ENCODE measurements at regions of chr5 and their contacts with region 1.

Region 1: DNA sequence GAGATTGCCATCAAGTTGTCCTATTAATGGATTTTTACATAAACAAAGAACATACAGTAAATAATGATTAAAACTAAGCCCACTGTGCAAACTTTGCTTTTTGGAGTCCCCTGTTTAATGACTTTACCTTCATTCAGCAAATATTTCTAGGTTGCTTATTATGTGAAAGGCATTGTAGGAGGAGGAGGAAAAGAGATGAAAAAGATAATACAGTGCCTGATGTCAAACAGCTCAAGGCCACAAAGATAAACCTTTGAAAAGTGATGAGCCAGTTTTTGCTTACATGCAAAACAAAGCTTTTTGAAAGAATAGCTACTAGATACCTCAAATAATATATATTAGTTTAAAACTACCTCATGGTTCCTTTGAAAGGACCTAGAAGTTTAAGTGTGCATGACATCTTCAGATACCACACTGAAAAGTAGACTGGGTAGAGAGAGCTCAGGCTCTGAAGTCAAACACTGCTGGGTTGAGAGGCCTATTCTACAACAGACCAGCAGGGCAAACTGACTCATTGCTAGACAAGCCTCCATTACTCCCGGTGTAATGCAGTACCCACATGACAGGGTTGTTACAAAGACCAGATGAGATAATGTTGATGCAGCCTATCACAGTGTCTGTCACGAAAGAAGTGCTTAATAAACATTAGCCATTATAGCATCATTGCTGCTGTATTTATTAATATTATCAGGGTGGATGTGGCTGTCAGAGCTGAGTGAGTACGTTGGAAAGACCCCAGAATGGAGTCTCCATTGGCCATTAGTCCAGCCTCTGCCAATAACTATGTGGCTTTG is 11.8 kb downstream of the DEPDC1B start:
- DNase-seq: no peak
- ATAC-seq: peak; percentile 57
- H3K4me3 ChIP-seq: no peak overlapping the region
- H3K4me3 Mint-ChIP-seq: no peak overlapping the region
- H3K27ac ChIP-seq: no peak overlapping the region
- H3K27ac Mint-ChIP-seq: no peak overlapping the region
- H3K4me1 ChIP-seq: no peaks in the 10 kb centered on the region
- H3K4me1 Mint-ChIP-seq: peaks cover 2% of the 10 kb centered on the region
- H3K27me3 ChIP-seq: no peaks in the 10 kb centered on the region
- H3K27me3 Mint-ChIP-seq: no peaks in the 10 kb centered on the region
- CTCF ChIP-seq: peak; percentile 15

Region 2: DNA sequence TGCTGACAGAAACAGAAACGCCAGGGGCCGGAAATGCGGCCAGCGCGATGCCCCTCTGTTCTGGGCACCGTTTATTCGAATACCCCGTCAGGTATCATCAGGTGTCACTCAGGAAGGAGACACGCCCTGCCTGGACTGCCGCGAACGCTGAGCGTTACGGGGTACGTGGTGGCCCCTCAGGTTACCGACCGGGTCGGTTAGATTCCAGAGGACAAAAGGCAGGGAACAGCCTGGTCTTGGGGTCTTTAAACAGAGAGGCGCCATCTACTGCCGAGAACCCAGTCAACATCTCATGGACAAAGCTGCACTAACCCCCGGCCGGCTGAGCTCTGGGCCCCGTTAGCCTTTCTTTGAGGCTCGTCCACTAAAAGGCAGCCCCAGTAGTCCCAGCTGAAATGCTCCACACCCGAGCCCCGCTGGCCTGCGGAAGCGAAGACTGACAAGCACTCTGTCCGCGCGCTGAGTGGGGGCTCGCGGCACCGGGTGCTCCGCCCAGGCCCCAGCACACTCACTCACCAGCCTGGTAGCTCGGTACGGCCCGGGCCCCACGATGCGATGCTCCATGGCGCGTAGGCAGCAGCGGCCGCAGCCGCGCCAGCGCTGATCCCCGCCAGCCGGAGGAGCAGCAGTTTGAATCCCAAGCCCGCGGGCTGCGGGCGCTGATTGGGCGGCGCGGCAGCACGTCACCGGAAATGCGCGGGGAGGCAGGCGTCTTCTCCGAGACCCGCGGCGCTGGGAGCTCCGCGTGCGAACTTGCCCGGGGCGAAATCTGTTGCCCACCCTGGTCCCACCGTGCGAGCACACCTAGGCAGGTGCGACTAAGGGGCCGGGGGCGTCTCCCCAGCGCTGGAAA is 11.6 kb after region 1 on chr5 and contains the start of gene DEPDC1B:
- CTCF ChIA-PET with region 1: interaction called, 13 read pairs
- POLR2A ChIA-PET with region 1: no interaction called
- intact Hi-C with region 1: no loop called
- DNase-seq: peak; percentile 86
- ATAC-seq: peak; percentile 88
- H3K4me3 ChIP-seq: peak within 1 kb of the TSS; percentile 79 to 89 (median 85)
- H3K4me3 Mint-ChIP-seq: peak within 1 kb of the TSS; percentile 95
- H3K27ac ChIP-seq: peak within 1 kb of the TSS in 1 of 2 donors; percentile 41
- H3K27ac Mint-ChIP-seq: peak within 1 kb of the TSS; percentile 55
- H3K4me1 ChIP-seq: peaks cover 4 to 17% of the 10 kb centered on the region in 2 donors
- H3K4me1 Mint-ChIP-seq: peaks cover 16% of the 10 kb centered on the region
- H3K27me3 ChIP-seq: peaks cover 0 to 8% (median 0%) of the 10 kb centered on the region in 4 experiments
- H3K27me3 Mint-ChIP-seq: no peaks in the 10 kb centered on the region
- CTCF ChIP-seq: no peak
- total RNA-seq, gene DEPDC1B: 0.25 and 0.85 TPM in 2 replicates

Region 3: DNA sequence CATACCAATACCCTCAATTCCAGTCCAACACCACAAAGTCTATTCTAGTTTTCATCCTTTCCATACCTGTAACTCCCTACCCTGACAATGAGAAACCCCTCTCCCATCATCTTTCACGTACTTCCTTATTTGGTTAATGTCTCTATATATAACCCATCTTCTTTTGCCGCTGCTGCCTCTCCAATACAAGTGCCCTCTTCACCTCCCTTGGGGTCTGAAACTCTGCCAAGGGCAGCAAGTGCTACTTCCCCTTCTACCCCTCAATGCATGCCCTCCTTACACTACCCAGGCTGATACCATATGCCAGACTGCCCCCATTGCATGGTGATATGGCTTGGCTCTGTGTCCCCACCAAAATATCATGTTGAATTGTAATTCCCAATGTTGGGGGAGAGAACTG is 498.5 kb after region 1 on chr5:
- CTCF ChIA-PET with region 1: no interaction called
- POLR2A ChIA-PET with region 1: no interaction called
- intact Hi-C with region 1: no loop called
- DNase-seq: no peak
- ATAC-seq: no peak
- H3K4me3 ChIP-seq: no peak overlapping the region
- H3K4me3 Mint-ChIP-seq: no peak overlapping the region
- H3K27ac ChIP-seq: no peak overlapping the region
- H3K27ac Mint-ChIP-seq: no peak overlapping the region
- H3K4me1 ChIP-seq: no peaks in the 10 kb centered on the region
- H3K4me1 Mint-ChIP-seq: peaks cover 11% of the 10 kb centered on the region
- H3K27me3 ChIP-seq: no peaks in the 10 kb centered on the region
- H3K27me3 Mint-ChIP-seq: peaks cover 5% of the 10 kb centered on the region
- CTCF ChIP-seq: no peak